A549 (cell line): ENCODE measurements at regions of chr15 and their contacts with region 1.

Region 1: GRCh38 chr15:98779463-98780071 is 131.2 kb downstream of the IGF1R start:
- DNase-seq: peak; percentile 85 to 87
- ATAC-seq: peak; percentile 95
- H3K4me3 ChIP-seq: no peak overlapping the region
- H3K27ac ChIP-seq: peak overlapping the region; percentile 67 to 73
- H3K4me1 ChIP-seq: peaks cover 79% of the 10 kb centered on the region
- CTCF ChIP-seq: peak; percentile 97
- EP300 ChIP-seq: no peak
- POLR2A ChIP-seq: no peak
- RAD21 ChIP-seq: peak; percentile 95 to 97

Region 2: DNA sequence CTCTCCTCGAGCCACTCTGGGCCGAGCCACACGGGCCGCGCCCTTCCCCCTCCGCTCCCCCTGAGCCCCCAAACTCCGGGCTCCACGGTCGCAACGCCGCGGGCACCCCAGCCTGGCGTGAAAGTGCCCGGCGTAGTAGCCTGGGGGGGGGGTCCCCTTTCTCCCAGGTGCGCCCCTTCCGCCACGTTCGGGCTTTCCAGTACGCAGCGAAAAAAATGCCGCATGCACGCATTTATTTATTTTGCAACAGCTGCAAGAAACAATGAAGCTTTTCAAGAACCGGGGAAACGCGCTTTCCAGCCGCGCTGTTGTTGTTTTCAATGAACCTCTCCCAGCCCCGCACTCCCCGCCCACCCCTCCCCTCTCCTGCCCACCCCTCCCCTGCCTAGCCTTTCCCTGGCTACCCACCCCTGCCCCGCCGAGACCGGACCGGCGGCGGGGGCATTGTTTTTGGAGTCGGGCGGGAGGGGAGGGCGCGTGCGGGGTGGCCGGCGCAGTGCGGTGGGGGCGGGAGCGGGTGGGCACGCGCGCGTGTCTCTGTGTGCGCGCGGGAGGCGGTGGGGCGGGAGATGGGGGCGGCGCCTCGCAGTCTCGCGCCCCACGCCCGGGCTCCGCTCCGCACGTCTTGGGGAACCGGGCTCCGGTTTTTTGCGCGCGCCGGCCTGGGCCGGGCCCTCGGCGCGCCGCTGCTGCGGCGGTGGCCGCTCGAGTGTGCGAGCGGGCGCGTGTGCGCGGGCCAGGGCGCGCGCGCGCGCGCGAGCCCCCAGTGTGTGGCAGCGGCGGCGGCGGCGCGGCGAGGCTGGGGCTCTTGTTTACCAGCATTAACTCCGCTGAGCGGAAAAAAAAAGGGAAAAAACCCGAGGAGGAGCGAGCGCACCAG is 131.6 kb before region 1 on chr15 and contains the start of gene IGF1R:
- CTCF ChIA-PET with region 1: interaction called, 17 read pairs
- POLR2A ChIA-PET with region 1: no interaction called
- DNase-seq: peak; percentile 79 to 92
- ATAC-seq: peak; percentile 51 to 55
- H3K4me3 ChIP-seq: peak within 1 kb of the TSS; percentile 84
- H3K27ac ChIP-seq: peak within 1 kb of the TSS; percentile 96 to 97
- H3K4me1 ChIP-seq: peaks cover 21% of the 10 kb centered on the region
- CTCF ChIP-seq: peak; percentile 4; the same call in 2 of the 3 replicates
- EP300 ChIP-seq: peak in 1 of 2 experiments; percentile 33; a peak in 1 of 5 replicates
- POLR2A ChIP-seq: no peak
- RAD21 ChIP-seq: no peak
- polyA plus RNA-seq, gene IGF1R: 69.5 and 117 TPM in 2 replicates

Region 3: GRCh38 chr15:98749225-98749624 is 30.3 kb before region 1 on chr15:
- CTCF ChIA-PET with region 1: interaction called, 10 read pairs
- POLR2A ChIA-PET with region 1: no interaction called
- DNase-seq: no peak
- ATAC-seq: no peak
- H3K4me3 ChIP-seq: no peak overlapping the region
- H3K27ac ChIP-seq: no peak overlapping the region
- H3K4me1 ChIP-seq: peaks cover 57% of the 10 kb centered on the region
- CTCF ChIP-seq: no peak
- EP300 ChIP-seq: no peak
- POLR2A ChIP-seq: no peak
- RAD21 ChIP-seq: no peak

Region 4: GRCh38 chr15:98800437-98801233 is 21.1 kb after region 1 on chr15:
- CTCF ChIA-PET with region 1: interaction called, 172 read pairs
- POLR2A ChIA-PET with region 1: no interaction called
- DNase-seq: peak; percentile 67 to 81
- ATAC-seq: peak; percentile 68 to 77
- H3K4me3 ChIP-seq: peak overlapping the region; percentile 17
- H3K27ac ChIP-seq: peak overlapping the region; percentile 87 to 89
- H3K4me1 ChIP-seq: peaks cover 99% of the 10 kb centered on the region
- CTCF ChIP-seq: no peak
- EP300 ChIP-seq: peak in 1 of 2 experiments; percentile 44; a peak in 1 of 5 replicates
- POLR2A ChIP-seq: no peak
- RAD21 ChIP-seq: 0 out of 5 replicates have a peak, but pooled peaks of 1 of the 2 experiments have one; percentile 7

Region 5: GRCh38 chr15:98817745-98818144 is 38.2 kb after region 1 on chr15:
- CTCF ChIA-PET with region 1: interaction called, 14 read pairs
- POLR2A ChIA-PET with region 1: no interaction called
- DNase-seq: no peak
- ATAC-seq: no peak
- H3K4me3 ChIP-seq: no peak overlapping the region
- H3K27ac ChIP-seq: 0 out of 6 replicates have a peak overlapping the region, but pooled peaks of 1 of the 2 experiments have one; percentile 4
- H3K4me1 ChIP-seq: peaks cover 15% of the 10 kb centered on the region
- CTCF ChIP-seq: no peak
- EP300 ChIP-seq: no peak
- POLR2A ChIP-seq: no peak
- RAD21 ChIP-seq: no peak

Region 6: GRCh38 chr15:98873441-98874201 is 94.1 kb after region 1 on chr15:
- CTCF ChIA-PET with region 1: interaction called, 14 read pairs
- POLR2A ChIA-PET with region 1: no interaction called
- DNase-seq: peak; percentile 97
- ATAC-seq: peak; percentile 86 to 89
- H3K4me3 ChIP-seq: peak overlapping the region; percentile 26
- H3K27ac ChIP-seq: peak overlapping the region; percentile 95 to 97
- H3K4me1 ChIP-seq: peaks cover 96% of the 10 kb centered on the region
- CTCF ChIP-seq: peak; percentile 43
- EP300 ChIP-seq: peak; percentile 96 to 99
- POLR2A ChIP-seq: no peak; the same call in 1 of the 2 replicates
- RAD21 ChIP-seq: peak; percentile 30 to 36

Region 7: GRCh38 chr15:98914626-98915025 is 135.1 kb after region 1 on chr15:
- CTCF ChIA-PET with region 1: interaction called, 10 read pairs
- POLR2A ChIA-PET with region 1: no interaction called
- DNase-seq: peak in 1 of 2 experiments; percentile 38
- ATAC-seq: peak in 1 of 2 experiments; percentile 12; a peak in 2 of 6 replicates
- H3K4me3 ChIP-seq: no peak overlapping the region
- H3K27ac ChIP-seq: peak overlapping the region in 1 of 2 experiments; percentile 47; a peak in 2 of 6 replicates
- H3K4me1 ChIP-seq: peaks cover 19% of the 10 kb centered on the region
- CTCF ChIP-seq: no peak
- EP300 ChIP-seq: no peak
- POLR2A ChIP-seq: no peak
- RAD21 ChIP-seq: no peak

Region 8: GRCh38 chr15:99014803-99015676 is 235.5 kb after region 1 on chr15:
- CTCF ChIA-PET with region 1: no interaction called
- POLR2A ChIA-PET with region 1: no interaction called
- DNase-seq: peak; percentile 61 to 77
- ATAC-seq: peak; percentile 92 to 97
- H3K4me3 ChIP-seq: peak overlapping the region; percentile 69
- H3K27ac ChIP-seq: peak overlapping the region; percentile 86 to 96
- H3K4me1 ChIP-seq: peaks cover 30% of the 10 kb centered on the region
- CTCF ChIP-seq: no peak
- EP300 ChIP-seq: no peak
- POLR2A ChIP-seq: no peak
- RAD21 ChIP-seq: peak in 1 of 2 experiments; percentile 22; a peak in 2 of 5 replicates

Region 9: GRCh38 chr15:99167640-99168039 is 388.1 kb after region 1 on chr15:
- CTCF ChIA-PET with region 1: no interaction called
- POLR2A ChIA-PET with region 1: no interaction called
- DNase-seq: no peak
- ATAC-seq: no peak
- H3K4me3 ChIP-seq: no peak overlapping the region
- H3K27ac ChIP-seq: no peak overlapping the region
- H3K4me1 ChIP-seq: no peaks in the 10 kb centered on the region
- CTCF ChIP-seq: no peak
- EP300 ChIP-seq: no peak
- POLR2A ChIP-seq: no peak
- RAD21 ChIP-seq: no peak